ENCODE measurements at regions of chr1 and their contacts with region 1.

Region 1: GRCh38 chr1:205977402-205978014 is 25.7 kb downstream of the RAB7B start:
- DNase-seq: peak; percentile 23
- ATAC-seq: peak; percentile 98
- H3K4me3 ChIP-seq: no peak overlapping the region
- H3K27ac ChIP-seq: no peak overlapping the region
- H3K4me1 ChIP-seq: no peaks in the 10 kb centered on the region
- H3K27me3 ChIP-seq: no peaks in the 10 kb centered on the region; a peak in 1 of 4 replicates
- CTCF ChIP-seq: peak; percentile 90 to 98 (median 93)
- EP300 ChIP-seq: no peak
- POLR2A ChIP-seq: no peak
- RAD21 ChIP-seq: peak; percentile 99

Region 2: DNA sequence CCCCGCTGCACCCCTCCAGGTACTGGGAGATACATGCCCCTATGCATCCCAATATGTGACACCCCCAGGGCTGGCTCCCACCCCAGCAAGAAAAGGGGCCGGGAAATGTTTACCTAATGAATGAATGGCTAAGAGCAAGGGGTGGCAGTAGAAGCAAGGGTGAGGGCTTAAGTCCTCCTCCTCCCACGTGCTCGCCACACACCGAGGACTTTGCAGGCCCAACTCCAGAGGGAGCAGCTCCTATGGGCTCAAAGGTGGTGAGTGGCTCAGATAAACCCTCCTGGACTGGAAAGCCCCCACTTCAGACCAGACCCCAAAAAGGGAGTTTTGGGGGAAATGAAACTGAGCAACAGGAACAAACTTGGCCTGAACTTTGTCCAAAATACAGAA is 308.6 kb before region 1 on chr1:
- CTCF ChIA-PET with region 1: interaction called, 15 read pairs
- POLR2A ChIA-PET with region 1: no interaction called
- RAD21 ChIA-PET with region 1: interaction called, 9 read pairs
- SMC1A ChIA-PET with region 1: interaction called, 12 read pairs
- in situ Hi-C with region 1: no loop called
- intact Hi-C with region 1: no loop called
- DNase-seq: peak; percentile 65
- ATAC-seq: peak; percentile 63
- H3K4me3 ChIP-seq: peak overlapping the region; percentile 51; the same call in 1 of the 2 replicates
- H3K27ac ChIP-seq: peak overlapping the region; percentile 71
- H3K4me1 ChIP-seq: peaks cover 80% of the 10 kb centered on the region
- H3K27me3 ChIP-seq: no peaks in the 10 kb centered on the region
- CTCF ChIP-seq: peak in 2 of 3 experiments; percentile 31 to 48; a peak in 3 of 6 replicates
- EP300 ChIP-seq: peak; percentile 22 to 61; a peak in 2 of 4 replicates
- POLR2A ChIP-seq: no peak
- RAD21 ChIP-seq: peak; percentile 30; the same call in 1 of the 2 replicates

Region 3: DNA sequence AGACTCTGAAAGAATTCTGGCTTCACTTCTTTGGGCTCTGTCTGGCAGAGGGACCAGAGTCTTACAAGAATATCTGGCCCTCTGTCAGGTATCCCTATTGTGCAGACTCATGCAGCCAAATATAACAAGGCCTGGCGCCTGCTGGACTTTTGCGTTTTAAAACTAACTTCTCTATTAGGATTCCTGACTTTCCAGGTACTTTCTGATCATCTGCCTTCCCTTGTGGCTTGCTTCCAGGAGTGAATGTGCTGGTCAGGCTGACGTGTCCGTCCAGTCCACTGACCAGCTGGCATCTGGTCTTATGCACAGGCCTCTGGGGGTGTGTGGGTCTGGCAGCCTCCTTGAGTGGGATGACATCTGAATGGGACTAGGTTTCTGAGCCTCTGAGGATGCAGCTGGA is 193.6 kb before region 1 on chr1:
- CTCF ChIA-PET with region 1: interaction called, 222 read pairs
- POLR2A ChIA-PET with region 1: no interaction called
- RAD21 ChIA-PET with region 1: interaction called, 12 read pairs
- SMC1A ChIA-PET with region 1: interaction called, 14 read pairs
- in situ Hi-C with region 1: no loop called
- intact Hi-C with region 1: no loop called
- DNase-seq: no peak
- ATAC-seq: no peak
- H3K4me3 ChIP-seq: no peak overlapping the region
- H3K27ac ChIP-seq: no peak overlapping the region
- H3K4me1 ChIP-seq: no peaks in the 10 kb centered on the region
- H3K27me3 ChIP-seq: peaks cover 0 to 6% of the 10 kb centered on the region in 2 experiments; a peak in 1 of 4 replicates
- CTCF ChIP-seq: no peak
- EP300 ChIP-seq: no peak
- POLR2A ChIP-seq: no peak
- RAD21 ChIP-seq: no peak

Region 4: DNA sequence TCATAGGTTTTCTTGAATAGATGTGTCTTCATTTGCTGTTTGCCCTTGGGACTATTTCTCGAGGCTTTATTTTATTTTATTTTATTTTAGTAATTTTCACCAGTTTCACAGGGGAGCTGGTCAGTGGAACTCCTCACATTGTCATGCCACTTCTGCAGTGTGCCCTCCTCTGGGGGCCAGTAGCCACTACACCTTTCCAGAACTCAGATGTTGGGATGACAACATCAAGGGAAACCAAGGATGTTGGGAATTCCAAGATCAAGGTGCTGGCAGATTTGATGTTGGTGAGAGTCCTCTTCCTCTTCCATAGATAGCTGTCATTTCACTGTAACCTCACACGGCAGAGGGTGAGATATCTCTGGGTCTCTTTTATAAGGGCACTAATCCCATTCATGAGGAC is 69.7 kb before region 1 on chr1:
- CTCF ChIA-PET with region 1: interaction called, 13 read pairs
- POLR2A ChIA-PET with region 1: no interaction called
- RAD21 ChIA-PET with region 1: interaction called, 4 read pairs
- SMC1A ChIA-PET with region 1: interaction called, 7 read pairs
- in situ Hi-C with region 1: no loop called
- intact Hi-C with region 1: no loop called
- DNase-seq: no peak
- ATAC-seq: no peak
- H3K4me3 ChIP-seq: no peak overlapping the region
- H3K27ac ChIP-seq: no peak overlapping the region
- H3K4me1 ChIP-seq: no peaks in the 10 kb centered on the region
- H3K27me3 ChIP-seq: no peaks in the 10 kb centered on the region
- CTCF ChIP-seq: peak; percentile 31 to 60 (median 39); a peak in 5 of 6 replicates
- EP300 ChIP-seq: no peak
- POLR2A ChIP-seq: no peak
- RAD21 ChIP-seq: peak; percentile 20; the same call in 1 of the 2 replicates

Region 5: DNA sequence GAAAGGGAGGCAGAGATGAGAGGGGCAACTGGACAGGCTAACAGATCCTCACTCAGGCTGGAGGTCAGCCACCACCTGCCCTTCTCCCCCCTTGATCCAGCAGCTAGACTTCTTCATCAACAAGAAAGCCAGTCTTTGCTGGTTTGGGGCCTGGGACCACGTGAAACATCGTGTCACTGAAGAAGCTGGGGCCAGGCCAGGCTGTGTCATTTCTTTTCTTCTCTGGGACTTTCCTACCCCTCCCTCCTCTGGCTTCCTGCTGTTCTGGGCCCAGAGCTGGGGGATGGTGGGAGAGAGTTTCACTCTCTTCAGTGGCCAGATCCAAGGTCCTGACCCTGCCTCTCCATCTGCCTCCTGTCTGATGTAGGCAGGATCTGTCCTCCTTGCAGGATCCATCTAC is 16.1 kb before region 1 on chr1:
- CTCF ChIA-PET with region 1: interaction called, 15 read pairs
- POLR2A ChIA-PET with region 1: interaction called, 7 read pairs
- RAD21 ChIA-PET with region 1: interaction called, 8 read pairs
- SMC1A ChIA-PET with region 1: interaction called, 8 read pairs
- in situ Hi-C with region 1: no loop called
- intact Hi-C with region 1: no loop called
- DNase-seq: no peak
- ATAC-seq: peak; percentile 87
- H3K4me3 ChIP-seq: no peak overlapping the region
- H3K27ac ChIP-seq: no peak overlapping the region
- H3K4me1 ChIP-seq: peaks cover 9% of the 10 kb centered on the region; the same call in 1 of the 2 replicates
- H3K27me3 ChIP-seq: peaks cover 0 to 2% of the 10 kb centered on the region in 2 experiments; a peak in 3 of 4 replicates
- CTCF ChIP-seq: no peak
- EP300 ChIP-seq: no peak
- POLR2A ChIP-seq: no peak
- RAD21 ChIP-seq: no peak

Region 6: GRCh38 chr1:206030714-206031113 is 53.2 kb after region 1 on chr1:
- CTCF ChIA-PET with region 1: interaction called, 107 read pairs
- POLR2A ChIA-PET with region 1: no interaction called
- RAD21 ChIA-PET with region 1: interaction called, 54 read pairs
- SMC1A ChIA-PET with region 1: interaction called, 5 read pairs
- in situ Hi-C with region 1: no loop called
- intact Hi-C with region 1: no loop called
- DNase-seq: peak; percentile 66
- ATAC-seq: peak; percentile 99
- H3K4me3 ChIP-seq: no peak overlapping the region
- H3K27ac ChIP-seq: no peak overlapping the region
- H3K4me1 ChIP-seq: peaks cover 15% of the 10 kb centered on the region
- H3K27me3 ChIP-seq: no peaks in the 10 kb centered on the region
- CTCF ChIP-seq: peak; percentile 85 to 95 (median 95)
- EP300 ChIP-seq: no peak
- POLR2A ChIP-seq: no peak
- RAD21 ChIP-seq: peak; percentile 92

Measured in GM12878 (cell line).